IMR-90 (cell line): ENCODE measurements at regions of chr18 and their contacts with region 1.

Region 1: DNA sequence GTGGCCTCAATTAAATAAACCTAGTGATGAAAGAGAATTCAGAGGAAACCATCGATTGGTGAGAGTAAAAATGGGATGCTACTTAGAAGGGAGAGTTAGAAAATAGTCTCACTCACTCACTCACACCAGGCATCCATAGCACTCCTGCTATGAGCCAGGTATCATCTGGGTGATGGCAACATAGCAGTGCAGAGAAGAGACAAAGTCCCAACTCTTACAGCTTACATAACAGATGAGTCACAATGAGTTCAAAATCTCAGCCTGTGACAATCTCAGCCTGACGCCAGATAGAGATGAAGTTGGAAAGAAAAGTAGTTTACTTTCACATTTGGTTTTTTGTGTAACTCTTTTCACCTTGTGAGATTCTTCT is 55.4 kb upstream of the THOC1 start:
- DNase-seq: peak; percentile 38
- ATAC-seq: no peak
- H3K4me3 ChIP-seq: no peak overlapping the region
- H3K27ac ChIP-seq: no peak overlapping the region
- H3K4me1 ChIP-seq: peaks cover 1% of the 10 kb centered on the region; the same call in 1 of the 2 replicates
- H3K27me3 ChIP-seq: peaks cover 50% of the 10 kb centered on the region
- CTCF ChIP-seq: no peak
- POLR2A ChIP-seq: no peak
- RAD21 ChIP-seq: no peak

Region 2: GRCh38 chr18:394997-395383 is 71.8 kb after region 1 on chr18:
- CTCF ChIA-PET with region 1: no interaction called
- POLR2A ChIA-PET with region 1: no interaction called
- dilution Hi-C with region 1: no loop called
- in situ Hi-C with region 1: no loop called
- intact Hi-C with region 1: loop called (anchors 2 kb)
- DNase-seq: peak; percentile 75
- ATAC-seq: peak; percentile 50
- H3K4me3 ChIP-seq: no peak overlapping the region
- H3K27ac ChIP-seq: peak overlapping the region; percentile 61; the same call in 1 of the 2 replicates
- H3K4me1 ChIP-seq: peaks cover 25% of the 10 kb centered on the region
- H3K27me3 ChIP-seq: 0 out of 2 replicates have a peak, but pooled peaks cover 1% of the 10 kb centered on the region
- CTCF ChIP-seq: no peak
- POLR2A ChIP-seq: no peak
- RAD21 ChIP-seq: no peak

Region 3: GRCh38 chr18:596288-596881 is 273.1 kb after region 1 on chr18:
- CTCF ChIA-PET with region 1: no interaction called
- POLR2A ChIA-PET with region 1: no interaction called
- dilution Hi-C with region 1: no loop called
- in situ Hi-C with region 1: no loop called
- intact Hi-C with region 1: no loop called
- DNase-seq: no peak
- ATAC-seq: no peak
- H3K4me3 ChIP-seq: no peak overlapping the region
- H3K27ac ChIP-seq: no peak overlapping the region
- H3K4me1 ChIP-seq: no peaks in the 10 kb centered on the region
- H3K27me3 ChIP-seq: peaks cover 18% of the 10 kb centered on the region
- CTCF ChIP-seq: no peak
- POLR2A ChIP-seq: no peak
- RAD21 ChIP-seq: no peak

Region 4: GRCh38 chr18:892316-892715 is 569.1 kb after region 1 on chr18:
- CTCF ChIA-PET with region 1: no interaction called
- POLR2A ChIA-PET with region 1: no interaction called
- dilution Hi-C with region 1: no loop called
- in situ Hi-C with region 1: no loop called
- intact Hi-C with region 1: no loop called
- DNase-seq: no peak
- ATAC-seq: no peak
- H3K4me3 ChIP-seq: no peak overlapping the region
- H3K27ac ChIP-seq: no peak overlapping the region
- H3K4me1 ChIP-seq: no peaks in the 10 kb centered on the region
- H3K27me3 ChIP-seq: no peaks in the 10 kb centered on the region
- CTCF ChIP-seq: no peak
- POLR2A ChIP-seq: no peak
- RAD21 ChIP-seq: no peak